Right cardiac atrium (tissue), 5 donors: ENCODE measurements at regions of chr1 and their contacts with region 1.

Region 1: DNA sequence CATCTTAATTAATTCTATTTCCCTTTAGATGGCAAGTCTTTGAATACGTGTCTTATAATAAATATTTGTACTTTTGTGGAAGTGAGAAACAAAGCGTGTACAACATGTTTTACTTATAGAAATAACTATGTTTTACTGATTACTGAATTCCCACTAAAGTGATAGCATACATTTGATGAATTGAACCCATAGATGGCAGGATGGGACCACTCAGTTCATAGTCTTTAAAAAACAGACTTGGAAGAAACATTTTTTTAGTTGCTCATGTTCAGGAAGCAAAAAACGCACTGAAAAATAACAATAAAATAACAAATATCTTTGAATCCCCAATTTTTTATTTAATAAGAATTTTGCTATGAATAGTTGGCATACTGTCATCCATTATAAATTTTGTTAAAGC is 507.1 kb upstream of the ZRANB2 start:
- DNase-seq: no peak
- ATAC-seq: peak in 1 of 2 donors; percentile 64
- H3K4me3 ChIP-seq: no peak overlapping the region
- H3K27ac ChIP-seq: no peak overlapping the region
- H3K4me1 ChIP-seq: no peaks in the 10 kb centered on the region
- H3K27me3 ChIP-seq: no peaks in the 10 kb centered on the region

Region 2: GRCh38 chr1:71240656-71241055 is 347.3 kb before region 1 on chr1:
- intact Hi-C with region 1: no loop called
- DNase-seq: no peak
- ATAC-seq: no peak
- H3K4me3 ChIP-seq: no peak overlapping the region
- H3K27ac ChIP-seq: no peak overlapping the region
- H3K4me1 ChIP-seq: no peaks in the 10 kb centered on the region
- H3K27me3 ChIP-seq: no peaks in the 10 kb centered on the region

Region 3: DNA sequence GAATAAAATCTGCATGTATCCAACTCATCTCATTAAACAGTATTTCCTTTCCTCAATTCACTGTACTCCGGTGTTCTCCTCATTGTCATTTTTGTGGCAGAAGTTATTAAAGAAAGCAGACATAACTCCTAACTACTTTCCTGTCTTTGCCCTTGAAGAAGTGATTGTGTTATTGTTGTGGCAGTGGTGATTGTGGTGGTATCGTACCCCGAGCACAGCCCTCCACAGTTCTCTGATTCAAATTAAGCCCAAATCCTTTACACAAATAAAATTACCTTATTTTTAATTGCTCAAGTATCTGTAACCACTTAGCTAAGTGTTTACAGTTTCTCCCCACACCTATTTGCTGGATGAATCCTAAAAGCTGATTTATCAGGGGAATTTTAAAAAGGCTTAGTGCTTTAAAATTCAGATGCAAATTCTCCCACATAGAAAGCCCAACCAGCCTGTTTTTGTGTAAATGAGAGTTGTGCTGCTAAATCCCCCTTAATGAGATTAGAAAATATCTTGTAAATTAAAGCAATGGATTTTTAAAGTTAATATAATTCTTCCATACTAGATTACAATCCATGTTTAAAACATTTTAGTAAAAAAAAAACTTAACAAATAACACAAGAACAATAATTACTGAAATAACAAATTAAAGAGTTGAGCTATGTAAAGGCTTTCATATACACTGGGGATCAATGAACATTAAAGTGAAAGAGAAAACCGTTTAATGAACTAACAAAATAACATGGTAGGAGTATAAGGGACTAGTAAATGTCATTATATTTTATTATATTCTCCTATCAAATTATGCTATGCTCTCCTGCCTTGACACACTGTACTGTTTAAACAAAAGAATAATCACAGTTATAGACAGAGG is 435.3 kb after region 1 on chr1:
- intact Hi-C with region 1: loop called in 1 of 4 experiments (anchors 10 kb)
- DNase-seq: no peak
- ATAC-seq: no peak
- H3K4me3 ChIP-seq: no peak overlapping the region
- H3K27ac ChIP-seq: no peak overlapping the region
- H3K4me1 ChIP-seq: no peaks in the 10 kb centered on the region
- H3K27me3 ChIP-seq: no peaks in the 10 kb centered on the region

Region 4: GRCh38 chr1:72037745-72038343 is 449.9 kb after region 1 on chr1:
- intact Hi-C with region 1: loop called in 2 of 4 experiments (anchors 5 to 10 kb)
- DNase-seq: no peak
- ATAC-seq: no peak
- H3K4me3 ChIP-seq: no peak overlapping the region
- H3K27ac ChIP-seq: no peak overlapping the region
- H3K4me1 ChIP-seq: no peaks in the 10 kb centered on the region
- H3K27me3 ChIP-seq: no peaks in the 10 kb centered on the region